HepG2 (cell line): ENCODE measurements at regions of chr22 and their contacts with region 1.

Region 1: GRCh38 chr22:35648066-35649025 is at the start of gene APOL6:
- DNase-seq: peak; percentile 76
- ATAC-seq: peak; percentile 80
- H3K4me3 ChIP-seq: peak within 1 kb of the TSS; percentile 85 to 89 (median 85)
- H3K27ac ChIP-seq: peak within 1 kb of the TSS; percentile 91
- H3K4me1 ChIP-seq: peaks cover 47% of the 10 kb centered on the region
- H3K27me3 ChIP-seq: no peaks in the 10 kb centered on the region; a peak in 1 of 5 replicates
- CTCF ChIP-seq: no peak
- EP300 ChIP-seq: peak in 1 of 2 experiments; percentile 26; a peak in 1 of 4 replicates
- POLR2A ChIP-seq: peak; percentile 62 to 69
- RAD21 ChIP-seq: 0 out of 2 replicates have a peak, but pooled peaks have one; percentile 18
- total RNA-seq, gene APOL6: 6.3 and 7.5 TPM in 2 replicates

Region 2: GRCh38 chr22:35661464-35661863 is 13.1 kb after region 1 on chr22:
- CTCF ChIA-PET with region 1: no interaction called
- POLR2A ChIA-PET with region 1: interaction called, 12 read pairs
- in situ Hi-C with region 1: no loop called
- intact Hi-C with region 1: no loop called
- DNase-seq: no peak
- ATAC-seq: no peak
- H3K4me3 ChIP-seq: no peak overlapping the region
- H3K27ac ChIP-seq: no peak overlapping the region
- H3K4me1 ChIP-seq: peaks cover 32% of the 10 kb centered on the region
- H3K27me3 ChIP-seq: no peaks in the 10 kb centered on the region
- CTCF ChIP-seq: no peak
- EP300 ChIP-seq: no peak
- POLR2A ChIP-seq: no peak
- RAD21 ChIP-seq: no peak

Region 3: GRCh38 chr22:35900483-35901168 is 252.3 kb after region 1 on chr22:
- CTCF ChIA-PET with region 1: no interaction called
- POLR2A ChIA-PET with region 1: no interaction called
- in situ Hi-C with region 1: no loop called
- intact Hi-C with region 1: no loop called
- DNase-seq: no peak
- ATAC-seq: no peak
- H3K4me3 ChIP-seq: no peak overlapping the region
- H3K27ac ChIP-seq: no peak overlapping the region
- H3K4me1 ChIP-seq: peaks cover 17% of the 10 kb centered on the region
- H3K27me3 ChIP-seq: no peaks in the 10 kb centered on the region
- CTCF ChIP-seq: no peak
- EP300 ChIP-seq: no peak
- POLR2A ChIP-seq: no peak
- RAD21 ChIP-seq: no peak